ENCODE measurements at regions of chr5 and their contacts with region 1.

Region 1: GRCh38 chr5:101942321-101943215 is 353.5 kb downstream of the SLCO4C1 start:
- DNase-seq: peak in 1 of 2 experiments; percentile 59
- H3K4me3 ChIP-seq: peak overlapping the region in 3 of 4 experiments; percentile 2 to 21 (median 4); a peak in 1 of 8 replicates
- H3K27ac ChIP-seq: no peak overlapping the region
- H3K4me1 ChIP-seq: peaks cover 0 to 4% (median 2%) of the 10 kb centered on the region in 4 experiments; a peak in 4 of 7 replicates
- H3K27me3 ChIP-seq: no peaks in the 10 kb centered on the region
- CTCF ChIP-seq: peak in 2 of 3 experiments; percentile 70 to 76; a peak in 3 of 4 replicates
- EP300 ChIP-seq: no peak
- POLR2A ChIP-seq: no peak
- RAD21 ChIP-seq: peak; percentile 84 to 89

Region 2: DNA sequence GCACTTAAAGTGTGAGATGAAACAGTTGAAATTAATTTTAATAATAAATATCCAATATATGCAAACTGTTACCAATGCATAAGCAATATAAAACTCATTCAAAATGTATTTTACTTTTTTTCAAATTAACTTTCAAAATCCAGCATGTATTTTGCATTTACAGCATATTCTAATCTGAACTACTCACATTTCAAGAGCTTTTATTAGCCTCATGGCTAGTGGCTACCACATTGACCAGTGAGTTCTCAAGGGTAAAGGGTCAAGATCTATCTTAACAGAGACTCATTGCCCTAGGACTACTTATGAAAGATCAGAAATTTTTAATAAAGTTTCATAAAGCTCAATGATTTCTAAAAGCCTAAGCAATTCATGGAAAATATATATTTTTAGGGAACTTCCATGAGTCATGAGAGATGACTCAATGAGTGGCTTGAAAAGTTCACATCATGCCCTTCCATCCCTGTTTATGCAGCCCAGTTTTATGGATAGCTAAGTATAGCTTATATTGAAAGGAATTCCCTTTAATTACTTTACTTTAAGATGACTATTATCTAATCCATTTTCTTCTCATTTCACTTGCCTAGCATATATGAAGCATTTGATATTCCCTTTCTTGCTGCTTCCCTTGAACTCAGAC is 255.1 kb before region 1 on chr5:
- CTCF ChIA-PET with region 1: no interaction called
- POLR2A ChIA-PET with region 1: no interaction called
- DNase-seq: no peak
- H3K4me3 ChIP-seq: peak overlapping the region in 1 of 4 experiments; percentile 22; a peak in 1 of 8 replicates
- H3K27ac ChIP-seq: no peak overlapping the region
- H3K4me1 ChIP-seq: peaks cover 0 to 5% (median 3%) of the 10 kb centered on the region in 4 experiments; a peak in 2 of 7 replicates
- H3K27me3 ChIP-seq: no peaks in the 10 kb centered on the region
- CTCF ChIP-seq: no peak
- EP300 ChIP-seq: no peak
- POLR2A ChIP-seq: no peak
- RAD21 ChIP-seq: no peak

Region 3: DNA sequence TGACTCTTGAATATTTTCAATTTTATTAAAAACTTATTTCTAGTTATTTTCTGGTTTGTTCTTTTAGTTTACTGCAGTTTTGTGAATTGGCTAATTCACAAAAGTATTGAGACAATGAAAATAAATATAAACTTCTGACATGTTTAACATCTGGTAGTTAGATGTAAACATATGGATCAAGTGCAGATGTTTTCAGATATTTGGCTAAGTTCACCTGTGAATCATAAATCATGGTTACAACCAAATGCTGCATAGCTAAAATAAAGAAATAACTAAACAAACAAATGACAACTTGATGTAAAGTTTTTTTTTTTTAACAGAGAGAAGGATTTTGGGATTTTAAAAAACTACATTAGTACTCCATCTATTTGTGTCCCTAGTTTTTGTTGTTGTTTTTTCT is 131.1 kb before region 1 on chr5:
- CTCF ChIA-PET with region 1: no interaction called
- POLR2A ChIA-PET with region 1: no interaction called
- DNase-seq: no peak
- H3K4me3 ChIP-seq: no peak overlapping the region
- H3K27ac ChIP-seq: no peak overlapping the region
- H3K4me1 ChIP-seq: no peaks in the 10 kb centered on the region
- H3K27me3 ChIP-seq: no peaks in the 10 kb centered on the region
- CTCF ChIP-seq: no peak
- EP300 ChIP-seq: no peak
- POLR2A ChIP-seq: no peak
- RAD21 ChIP-seq: no peak

Region 4: GRCh38 chr5:101929628-101930027 is 12.9 kb before region 1 on chr5:
- CTCF ChIA-PET with region 1: interaction called, 17 read pairs
- POLR2A ChIA-PET with region 1: no interaction called
- DNase-seq: no peak
- H3K4me3 ChIP-seq: no peak overlapping the region
- H3K27ac ChIP-seq: no peak overlapping the region
- H3K4me1 ChIP-seq: no peaks in the 10 kb centered on the region
- H3K27me3 ChIP-seq: peaks cover 0 to 1% (median 0%) of the 10 kb centered on the region in 4 experiments; a peak in 1 of 7 replicates
- CTCF ChIP-seq: no peak
- EP300 ChIP-seq: no peak
- POLR2A ChIP-seq: no peak
- RAD21 ChIP-seq: no peak

Region 5: GRCh38 chr5:101955891-101956290 is 13.3 kb after region 1 on chr5:
- CTCF ChIA-PET with region 1: interaction called, 27 read pairs
- POLR2A ChIA-PET with region 1: no interaction called
- DNase-seq: no peak
- H3K4me3 ChIP-seq: no peak overlapping the region
- H3K27ac ChIP-seq: no peak overlapping the region
- H3K4me1 ChIP-seq: no peaks in the 10 kb centered on the region
- H3K27me3 ChIP-seq: no peaks in the 10 kb centered on the region
- CTCF ChIP-seq: no peak
- EP300 ChIP-seq: no peak
- POLR2A ChIP-seq: no peak
- RAD21 ChIP-seq: no peak

Region 6: GRCh38 chr5:101977729-101978345 is 35.3 kb after region 1 on chr5:
- CTCF ChIA-PET with region 1: interaction called, 41 read pairs
- POLR2A ChIA-PET with region 1: no interaction called
- DNase-seq: no peak
- H3K4me3 ChIP-seq: no peak overlapping the region
- H3K27ac ChIP-seq: no peak overlapping the region
- H3K4me1 ChIP-seq: no peaks in the 10 kb centered on the region
- H3K27me3 ChIP-seq: no peaks in the 10 kb centered on the region
- CTCF ChIP-seq: peak in 2 of 3 experiments; percentile 58 to 70; a peak in 2 of 4 replicates
- EP300 ChIP-seq: no peak
- POLR2A ChIP-seq: no peak
- RAD21 ChIP-seq: peak; percentile 80

Region 7: GRCh38 chr5:102090770-102091381 is 148.3 kb after region 1 on chr5:
- CTCF ChIA-PET with region 1: interaction called, 31 read pairs
- POLR2A ChIA-PET with region 1: no interaction called
- DNase-seq: no peak
- H3K4me3 ChIP-seq: no peak overlapping the region
- H3K27ac ChIP-seq: no peak overlapping the region
- H3K4me1 ChIP-seq: peaks cover 0 to 4% (median 1%) of the 10 kb centered on the region in 4 experiments; a peak in 2 of 7 replicates
- H3K27me3 ChIP-seq: no peaks in the 10 kb centered on the region
- CTCF ChIP-seq: peak; percentile 33 to 46 (median 41)
- EP300 ChIP-seq: no peak
- POLR2A ChIP-seq: no peak
- RAD21 ChIP-seq: peak; percentile 49 to 60

Region 8: DNA sequence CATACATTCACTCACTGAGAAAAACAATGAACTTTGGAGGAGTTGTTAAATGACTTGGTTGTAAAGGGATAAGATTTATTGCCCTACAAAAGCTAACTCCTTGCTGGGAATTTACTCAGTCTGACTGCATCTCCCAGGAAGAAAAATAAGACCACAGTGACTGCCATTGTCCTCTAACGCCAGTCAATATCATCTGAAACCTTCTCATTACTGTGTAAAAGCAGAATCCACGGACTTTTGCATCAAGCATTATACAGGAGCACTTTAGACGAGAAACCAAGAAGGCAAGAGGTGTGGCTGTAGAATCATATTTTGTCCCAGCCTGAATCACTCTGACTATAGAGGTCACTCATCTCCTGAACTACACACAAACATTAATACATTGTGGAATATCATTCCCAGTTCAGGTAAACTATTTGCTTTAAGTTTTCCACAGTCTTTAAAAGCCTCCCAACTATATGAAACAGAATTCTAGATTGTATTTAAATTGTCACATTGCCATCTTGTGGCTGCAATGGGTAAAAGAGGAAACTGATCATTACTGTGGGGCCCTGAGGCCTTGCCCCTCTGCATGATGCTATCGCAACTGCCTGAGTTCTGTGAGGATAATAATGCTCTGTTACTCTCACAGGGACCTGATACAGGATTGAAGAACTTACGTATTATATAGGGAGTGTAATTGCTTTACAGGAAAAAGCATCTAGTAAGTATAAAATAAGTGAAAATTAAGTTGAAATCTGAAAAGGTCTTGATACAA is 210.6 kb after region 1 on chr5:
- CTCF ChIA-PET with region 1: interaction called, 38 read pairs
- POLR2A ChIA-PET with region 1: no interaction called
- DNase-seq: no peak
- H3K4me3 ChIP-seq: no peak overlapping the region
- H3K27ac ChIP-seq: no peak overlapping the region
- H3K4me1 ChIP-seq: peaks cover 0 to 3% (median 0%) of the 10 kb centered on the region in 4 experiments; a peak in 1 of 7 replicates
- H3K27me3 ChIP-seq: no peaks in the 10 kb centered on the region
- CTCF ChIP-seq: peak; percentile 18 to 48 (median 47)
- EP300 ChIP-seq: no peak
- POLR2A ChIP-seq: no peak
- RAD21 ChIP-seq: peak; percentile 73 to 75

Region 9: GRCh38 chr5:102223542-102224477 is 281.2 kb after region 1 on chr5:
- CTCF ChIA-PET with region 1: interaction called, 10 read pairs
- POLR2A ChIA-PET with region 1: no interaction called
- DNase-seq: no peak
- H3K4me3 ChIP-seq: no peak overlapping the region
- H3K27ac ChIP-seq: no peak overlapping the region
- H3K4me1 ChIP-seq: no peaks in the 10 kb centered on the region
- H3K27me3 ChIP-seq: no peaks in the 10 kb centered on the region
- CTCF ChIP-seq: peak in 2 of 3 experiments; percentile 34 to 51; a peak in 2 of 4 replicates
- EP300 ChIP-seq: no peak
- POLR2A ChIP-seq: no peak
- RAD21 ChIP-seq: peak; percentile 63 to 78

Measured in H1 (cell line).